ENCODE measurements at regions of chr5 and their contacts with region 1.

Region 1: GRCh38 chr5:143413958-143414669 is 10.6 kb upstream of the NR3C1 start:
- DNase-seq: no peak
- ATAC-seq: no peak
- H3K4me3 ChIP-seq: no peak overlapping the region
- H3K4me3 Mint-ChIP-seq: no peak overlapping the region
- H3K27ac ChIP-seq: no peak overlapping the region
- H3K27ac Mint-ChIP-seq: no peak overlapping the region
- H3K4me1 ChIP-seq: peaks cover 0 to 15% of the 10 kb centered on the region in 2 donors
- H3K4me1 Mint-ChIP-seq: peaks cover 0 to 20% (median 5%) of the 10 kb centered on the region in 7 donors
- H3K27me3 ChIP-seq: no peaks in the 10 kb centered on the region
- H3K27me3 Mint-ChIP-seq: no peaks in the 10 kb centered on the region

Region 2: DNA sequence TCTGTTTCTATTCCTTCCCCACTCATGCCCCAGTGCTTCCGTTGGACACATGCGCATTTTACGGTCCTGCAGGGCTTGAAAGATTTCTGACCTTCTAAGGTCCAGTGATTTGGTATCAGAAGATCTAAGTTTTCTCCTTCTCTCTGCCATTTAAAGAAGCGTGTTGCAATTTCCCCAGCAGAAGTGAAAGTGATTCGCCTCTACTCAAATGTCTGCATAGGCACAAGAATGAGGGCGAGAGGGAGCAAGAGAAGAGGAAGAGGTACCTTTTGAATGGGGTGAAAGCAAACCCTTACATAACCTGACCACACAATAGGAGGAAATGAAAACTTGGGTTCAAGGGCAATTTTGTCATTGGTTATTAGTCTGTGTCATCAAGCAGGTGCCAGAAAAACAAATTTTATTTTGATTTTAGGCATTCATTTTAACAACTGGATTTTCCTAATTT is 21.1 kb after region 1 on chr5:
- CTCF ChIA-PET with region 1: interaction called, 8 read pairs
- POLR2A ChIA-PET with region 1: interaction called, 38 read pairs
- intact Hi-C with region 1: no loop called
- DNase-seq: peak in 8 of 9 donors; percentile 25 to 63 (median 56)
- ATAC-seq: peak; percentile 79
- H3K4me3 ChIP-seq: peak overlapping the region; percentile 70
- H3K4me3 Mint-ChIP-seq: peak overlapping the region; percentile 93 to 99 (median 96)
- H3K27ac ChIP-seq: peak overlapping the region; percentile 81
- H3K27ac Mint-ChIP-seq: peak overlapping the region; percentile 91 to 100 (median 98)
- H3K4me1 ChIP-seq: peaks cover 20 to 27% of the 10 kb centered on the region in 2 donors
- H3K4me1 Mint-ChIP-seq: peaks cover 35 to 70% (median 66%) of the 10 kb centered on the region in 7 donors
- H3K27me3 ChIP-seq: no peaks in the 10 kb centered on the region
- H3K27me3 Mint-ChIP-seq: no peaks in the 10 kb centered on the region

Measured in naive thymus-derived CD4-positive, alpha-beta T cell (primary cell).